ENCODE measurements at regions of chr17 and their contacts with region 1.

Region 1: GRCh38 chr17:37701496-37701898 is 43.4 kb downstream of the HNF1B start:
- DNase-seq: peak; percentile 38
- ATAC-seq: 0 out of 2 replicates have a peak, but pooled peaks have one; percentile 43
- H3K4me3 ChIP-seq: no peak overlapping the region
- H3K27ac ChIP-seq: no peak overlapping the region
- H3K4me1 ChIP-seq: peaks cover 10% of the 10 kb centered on the region
- H3K27me3 ChIP-seq: no peaks in the 10 kb centered on the region
- CTCF ChIP-seq: peak; percentile 74

Region 2: GRCh38 chr17:37327341-37328090 is 374.0 kb before region 1 on chr17:
- CTCF ChIA-PET with region 1: interaction called, 15 read pairs
- POLR2A ChIA-PET with region 1: no interaction called
- intact Hi-C with region 1: no loop called
- DNase-seq: no peak
- ATAC-seq: no peak
- H3K4me3 ChIP-seq: no peak overlapping the region
- H3K27ac ChIP-seq: no peak overlapping the region
- H3K4me1 ChIP-seq: no peaks in the 10 kb centered on the region
- H3K27me3 ChIP-seq: no peaks in the 10 kb centered on the region
- CTCF ChIP-seq: no peak

Region 3: DNA sequence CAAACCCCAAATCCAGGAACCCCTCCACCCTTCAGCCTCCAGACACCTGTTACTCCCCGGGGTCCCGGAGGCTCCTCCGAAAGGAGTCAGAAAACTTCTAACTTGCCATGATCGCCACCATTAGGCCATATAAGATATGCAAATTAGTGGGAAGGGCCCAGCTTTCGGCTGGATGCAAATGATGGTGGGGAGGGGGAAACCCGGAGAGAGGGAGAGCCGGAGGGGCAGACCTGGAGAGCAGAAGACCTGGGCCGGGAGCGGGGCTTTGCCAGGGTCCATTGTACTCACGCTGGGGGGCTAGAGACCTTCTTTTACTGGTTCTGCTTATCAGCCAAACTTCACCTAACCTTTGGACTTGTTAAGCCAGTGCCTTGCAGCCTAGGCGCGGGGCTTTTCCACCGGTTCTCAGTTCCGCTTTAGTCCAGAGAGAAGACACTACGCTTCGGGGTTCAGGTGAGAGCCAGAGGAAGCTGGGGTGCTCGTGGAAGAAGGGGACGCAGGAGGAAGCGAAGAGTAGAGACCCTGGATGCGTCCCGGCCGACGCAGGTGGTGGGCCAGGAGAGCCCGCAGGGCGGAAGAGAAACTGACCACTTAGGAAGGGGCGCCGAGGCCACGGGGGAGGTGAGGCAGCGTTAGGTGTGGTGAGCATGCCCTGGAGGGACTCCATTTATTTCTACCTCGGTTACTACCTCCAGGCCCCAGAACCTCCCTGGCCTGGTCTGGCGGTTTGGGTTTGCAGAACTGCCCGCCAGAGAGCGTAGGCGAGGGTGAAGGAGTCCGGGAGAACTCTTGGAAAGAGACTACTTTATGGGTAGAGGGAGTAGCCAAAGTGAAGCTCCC is 43.7 kb after region 1 on chr17 and contains the start of gene HNF1B:
- CTCF ChIA-PET with region 1: no interaction called
- POLR2A ChIA-PET with region 1: no interaction called
- intact Hi-C with region 1: loop called (anchors 2 kb)
- DNase-seq: peak; percentile 31
- ATAC-seq: peak; percentile 45
- H3K4me3 ChIP-seq: peak within 1 kb of the TSS; percentile 76
- H3K27ac ChIP-seq: 0 out of 2 replicates have a peak within 1 kb of the TSS, but pooled peaks have one; percentile 39
- H3K4me1 ChIP-seq: no peaks in the 10 kb centered on the region
- H3K27me3 ChIP-seq: peaks cover 54% of the 10 kb centered on the region
- CTCF ChIP-seq: no peak
- total RNA-seq, gene HNF1B: 1.3 and 2.0 TPM in 2 replicates